K562 (cell line): ENCODE measurements at regions of chr19 and their contacts with region 1.

Region 1: GRCh38 chr19:19911150-19911549 is 10.4 kb downstream of the ZNF93 start:
- DNase-seq: no peak
- ATAC-seq: no peak
- H3K4me3 ChIP-seq: no peak overlapping the region
- H3K27ac ChIP-seq: no peak overlapping the region
- H3K4me1 ChIP-seq: no peaks in the 10 kb centered on the region; a peak in 1 of 5 replicates
- H3K27me3 ChIP-seq: no peaks in the 10 kb centered on the region
- CTCF ChIP-seq: no peak
- EP300 ChIP-seq: no peak
- POLR2A ChIP-seq: no peak
- RAD21 ChIP-seq: no peak

Region 2: GRCh38 chr19:19900729-19901444 is 10.3 kb before region 1 on chr19 and contains the start of gene ZNF93:
- CTCF ChIA-PET with region 1: no interaction called
- POLR2A ChIA-PET with region 1: interaction called, 15 read pairs
- in situ Hi-C with region 1: no loop called
- intact Hi-C with region 1: no loop called
- DNase-seq: peak; percentile 94 to 96 (median 95)
- ATAC-seq: peak; percentile 97
- H3K4me3 ChIP-seq: peak within 1 kb of the TSS; percentile 63
- H3K27ac ChIP-seq: peak within 1 kb of the TSS; percentile 91
- H3K4me1 ChIP-seq: peaks cover 8 to 16% of the 10 kb centered on the region in 2 experiments
- H3K27me3 ChIP-seq: no peaks in the 10 kb centered on the region
- CTCF ChIP-seq: no peak
- EP300 ChIP-seq: no peak
- POLR2A ChIP-seq: peak; percentile 92
- RAD21 ChIP-seq: no peak; a peak in 1 of 4 replicates
- polyA plus RNA-seq, gene ZNF93: 17.1 to 26.3 TPM